ENCODE measurements at regions of chr4 and their contacts with region 1.

Region 1: DNA sequence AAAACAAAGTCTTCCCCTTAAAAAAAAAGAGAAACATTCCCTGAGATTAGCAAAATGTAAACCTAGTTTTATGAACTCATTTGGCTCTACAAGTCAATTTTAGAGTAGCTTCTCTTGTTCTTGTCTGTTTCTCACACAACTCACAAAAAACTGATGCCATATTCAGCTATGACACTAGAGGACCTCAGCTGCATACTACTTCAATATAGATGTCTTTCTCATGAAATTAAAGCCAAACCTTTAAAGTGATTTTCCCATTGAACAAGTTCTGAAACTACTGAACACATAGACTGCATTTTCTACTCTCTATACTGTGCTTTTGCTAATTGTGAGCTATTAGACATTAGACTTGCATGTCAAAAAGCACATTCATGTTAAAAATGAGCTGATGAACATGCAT is 49.8 kb downstream of the TBCK start:
- DNase-seq: no peak
- ATAC-seq: no peak
- H3K4me3 Mint-ChIP-seq: no peak overlapping the region
- H3K27ac Mint-ChIP-seq: no peak overlapping the region
- H3K4me1 Mint-ChIP-seq: peaks cover 2% of the 10 kb centered on the region; the same call in 1 of the 2 replicates
- H3K27me3 Mint-ChIP-seq: no peaks in the 10 kb centered on the region
- CTCF ChIP-seq: no peak

Region 2: DNA sequence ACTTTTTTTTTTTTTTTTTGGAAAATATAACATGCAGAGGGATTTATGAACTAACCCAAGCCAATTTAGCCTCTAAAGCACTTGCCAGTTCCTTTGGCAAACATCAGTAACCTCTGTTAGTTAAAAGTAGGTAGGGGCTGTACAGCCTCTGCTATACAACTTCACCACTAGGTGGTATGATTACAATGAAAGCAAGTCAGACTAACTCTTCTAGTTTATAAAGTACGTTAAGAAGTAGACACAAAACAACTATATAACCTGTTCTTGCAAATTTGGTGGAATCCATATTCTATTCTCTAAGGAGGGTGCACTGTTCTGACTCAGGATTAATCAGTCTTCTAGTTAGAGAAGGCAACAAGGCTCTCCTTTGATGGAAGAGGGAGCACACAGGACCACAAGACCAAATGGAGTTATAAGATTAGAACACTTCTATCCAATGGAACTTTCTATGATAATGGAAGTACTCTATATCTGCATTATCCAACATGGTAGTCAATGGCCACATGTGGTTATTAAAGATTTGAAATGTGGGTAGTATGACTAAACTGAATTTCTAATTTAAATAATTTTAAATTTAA is 62.9 kb after region 1 on chr4:
- CTCF ChIA-PET with region 1: interaction called, 13 read pairs
- POLR2A ChIA-PET with region 1: no interaction called
- DNase-seq: no peak
- ATAC-seq: peak; percentile 87
- H3K4me3 Mint-ChIP-seq: no peak overlapping the region
- H3K27ac Mint-ChIP-seq: no peak overlapping the region
- H3K4me1 Mint-ChIP-seq: peaks cover 5% of the 10 kb centered on the region
- H3K27me3 Mint-ChIP-seq: no peaks in the 10 kb centered on the region
- CTCF ChIP-seq: no peak; the same call in 1 of the 2 replicates

Measured in WTC11 (cell line).